IMR-90 (cell line): ENCODE measurements at regions of chr9 and their contacts with region 1.

Region 1: GRCh38 chr9:112496074-112496722 is 9.6 kb downstream of the KIAA1958 start:
- DNase-seq: peak; percentile 15
- ATAC-seq: peak; percentile 46
- H3K4me3 ChIP-seq: no peak overlapping the region
- H3K27ac ChIP-seq: no peak overlapping the region; the same call in 1 of the 2 replicates
- H3K4me1 ChIP-seq: peaks cover 3% of the 10 kb centered on the region
- H3K27me3 ChIP-seq: no peaks in the 10 kb centered on the region
- CTCF ChIP-seq: no peak
- POLR2A ChIP-seq: no peak
- RAD21 ChIP-seq: no peak

Region 2: GRCh38 chr9:112411626-112412027 is 84.6 kb before region 1 on chr9:
- CTCF ChIA-PET with region 1: no interaction called
- POLR2A ChIA-PET with region 1: no interaction called
- dilution Hi-C with region 1: no loop called
- in situ Hi-C with region 1: no loop called
- intact Hi-C with region 1: no loop called
- DNase-seq: peak; percentile 55
- ATAC-seq: peak; percentile 89
- H3K4me3 ChIP-seq: no peak overlapping the region
- H3K27ac ChIP-seq: no peak overlapping the region
- H3K4me1 ChIP-seq: peaks cover 3% of the 10 kb centered on the region
- H3K27me3 ChIP-seq: no peaks in the 10 kb centered on the region
- CTCF ChIP-seq: no peak
- POLR2A ChIP-seq: no peak
- RAD21 ChIP-seq: no peak

Region 3: GRCh38 chr9:112532427-112532826 is 36.2 kb after region 1 on chr9:
- CTCF ChIA-PET with region 1: interaction called, 5 read pairs
- POLR2A ChIA-PET with region 1: no interaction called
- dilution Hi-C with region 1: no loop called
- in situ Hi-C with region 1: no loop called
- intact Hi-C with region 1: loop called (anchors 5 kb)
- DNase-seq: peak; percentile 80
- ATAC-seq: peak; percentile 77
- H3K4me3 ChIP-seq: no peak overlapping the region
- H3K27ac ChIP-seq: no peak overlapping the region
- H3K4me1 ChIP-seq: peaks cover 3% of the 10 kb centered on the region
- H3K27me3 ChIP-seq: no peaks in the 10 kb centered on the region
- CTCF ChIP-seq: no peak
- POLR2A ChIP-seq: no peak
- RAD21 ChIP-seq: no peak

Region 4: GRCh38 chr9:112586599-112587155 is 90.5 kb after region 1 on chr9:
- CTCF ChIA-PET with region 1: no interaction called
- POLR2A ChIA-PET with region 1: no interaction called
- dilution Hi-C with region 1: no loop called
- in situ Hi-C with region 1: no loop called
- intact Hi-C with region 1: no loop called
- DNase-seq: peak; percentile 42
- ATAC-seq: peak; percentile 51; the same call in 1 of the 2 replicates
- H3K4me3 ChIP-seq: no peak overlapping the region
- H3K27ac ChIP-seq: no peak overlapping the region
- H3K4me1 ChIP-seq: peaks cover 2% of the 10 kb centered on the region; the same call in 1 of the 2 replicates
- H3K27me3 ChIP-seq: no peaks in the 10 kb centered on the region
- CTCF ChIP-seq: no peak
- POLR2A ChIP-seq: no peak
- RAD21 ChIP-seq: no peak